Motor neuron (in vitro differentiated cells): ENCODE measurements at regions of chr7 and their contacts with region 1.

Region 1: DNA sequence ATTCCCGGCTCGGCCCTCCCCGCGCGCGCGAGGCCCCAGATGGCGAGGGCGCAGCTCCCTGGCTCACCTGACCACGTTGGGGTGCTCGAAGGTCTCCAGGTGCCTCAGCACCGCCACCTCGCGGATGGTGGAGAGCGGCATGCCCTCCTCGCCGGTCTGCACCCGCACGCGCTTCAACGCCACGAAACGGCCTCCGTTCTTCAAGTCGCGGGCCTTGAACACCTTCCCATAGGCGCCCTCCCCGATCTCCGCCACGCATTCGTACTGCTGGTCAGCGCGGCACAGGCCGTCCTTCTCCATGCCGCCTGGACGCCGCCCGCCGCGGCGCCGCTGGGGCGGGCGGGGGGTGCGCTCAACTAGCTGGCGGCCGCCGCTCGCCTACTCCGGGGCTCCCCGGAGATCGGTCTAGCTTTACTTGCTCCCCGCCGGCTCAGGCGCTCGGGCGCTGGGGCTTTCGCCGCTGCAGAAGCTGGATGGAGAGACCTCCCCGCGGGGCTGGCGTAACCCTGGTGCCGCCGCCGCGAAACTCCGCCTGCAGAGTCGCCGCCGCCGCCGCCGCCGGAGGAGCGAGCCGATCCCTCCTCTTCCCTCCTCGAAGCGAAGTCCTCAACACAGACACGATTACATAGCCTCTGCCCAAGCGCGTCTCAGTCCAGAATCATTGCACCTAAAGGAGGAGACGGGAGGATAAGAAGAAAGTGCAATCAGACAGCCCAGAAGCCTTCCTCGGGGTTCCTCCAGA is 3.2 kb downstream of the CDK6 start:
- ATAC-seq: peak; percentile 30 to 73 (median 64)
- H3K4me3 ChIP-seq: peak overlapping the region; percentile 61 to 84 (median 79)
- H3K27ac ChIP-seq: peak overlapping the region; percentile 42 to 79
- H3K4me1 ChIP-seq: peaks cover 25 to 29% of the 10 kb centered on the region in 2 donors

Region 2: DNA sequence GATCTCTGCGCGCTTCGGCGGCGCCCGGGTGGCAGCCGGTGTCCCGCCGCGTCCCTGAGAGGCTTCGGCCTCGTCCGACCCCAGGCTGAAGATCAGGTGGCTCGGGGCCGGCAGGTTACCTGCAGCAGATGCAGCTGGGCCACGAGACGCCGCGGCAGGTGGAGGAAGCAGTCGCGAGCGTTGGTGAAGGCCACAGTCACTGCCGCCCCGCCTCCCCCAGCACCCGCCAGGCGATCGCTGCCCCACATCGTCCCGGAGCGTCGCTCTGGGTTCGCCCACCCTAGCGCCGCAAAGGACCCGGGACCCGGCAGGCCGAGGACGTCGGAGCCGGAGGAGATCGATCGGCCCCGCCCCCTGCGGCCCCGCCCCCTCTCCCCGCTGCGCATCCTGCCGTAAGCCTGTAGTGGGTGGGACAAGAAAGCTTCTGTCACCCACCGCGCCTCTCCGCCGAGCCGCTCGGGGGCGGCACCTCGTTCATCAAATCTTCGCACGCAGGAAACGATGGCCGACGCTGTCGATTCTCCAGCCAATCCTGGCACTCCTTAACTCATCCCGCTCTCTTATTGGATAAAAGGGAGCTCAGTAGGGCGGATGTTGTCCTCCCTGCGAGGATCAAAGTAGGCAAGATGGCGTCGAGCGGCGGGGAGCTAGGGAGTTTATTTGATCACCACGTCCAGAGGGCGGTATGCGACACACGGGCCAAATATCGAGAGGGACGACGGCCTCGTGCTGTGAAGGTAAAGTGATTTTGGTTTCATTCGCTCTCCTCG is 304.8 kb before region 1 on chr7 and contains the starts of genes PEX1 and RBM48:
- in situ Hi-C with region 1: no loop called
- ATAC-seq: peak; percentile 90 to 96 (median 94)
- H3K4me3 ChIP-seq: peak within 1 kb of the TSS; percentile 59 to 87 (median 70)
- H3K27ac ChIP-seq: peak within 1 kb of the TSS; percentile 78 to 82
- H3K4me1 ChIP-seq: peaks cover 7 to 12% of the 10 kb centered on the region in 2 donors
- total RNA-seq, gene PEX1: 19.2 to 51.9 (median 25.9) TPM
- total RNA-seq, gene RBM48: 11.4 to 18.3 (median 15.2) TPM

Region 3: GRCh38 chr7:92621026-92621540 is 212.1 kb before region 1 on chr7:
- in situ Hi-C with region 1: loop called in 2 of 9 experiments (anchors 25 kb)
- ATAC-seq: peak; percentile 44 to 92 (median 75)
- H3K4me3 ChIP-seq: no peak overlapping the region
- H3K27ac ChIP-seq: no peak overlapping the region
- H3K4me1 ChIP-seq: peaks cover 2 to 3% of the 10 kb centered on the region in 2 donors

Region 4: GRCh38 chr7:92691578-92691977 is 141.6 kb before region 1 on chr7:
- in situ Hi-C with region 1: loop called in 3 of 9 experiments (anchors 25 kb)
- ATAC-seq: peak in 5 of 8 experiments; percentile 23 to 44 (median 32)
- H3K4me3 ChIP-seq: no peak overlapping the region
- H3K27ac ChIP-seq: no peak overlapping the region
- H3K4me1 ChIP-seq: peaks cover under 1 to 9% of the 10 kb centered on the region in 2 donors

Region 5: GRCh38 chr7:92933810-92934449 is 100.7 kb after region 1 on chr7:
- in situ Hi-C with region 1: no loop called
- ATAC-seq: no peak
- H3K4me3 ChIP-seq: no peak overlapping the region
- H3K27ac ChIP-seq: no peak overlapping the region
- H3K4me1 ChIP-seq: no peaks in the 10 kb centered on the region

Region 6: DNA sequence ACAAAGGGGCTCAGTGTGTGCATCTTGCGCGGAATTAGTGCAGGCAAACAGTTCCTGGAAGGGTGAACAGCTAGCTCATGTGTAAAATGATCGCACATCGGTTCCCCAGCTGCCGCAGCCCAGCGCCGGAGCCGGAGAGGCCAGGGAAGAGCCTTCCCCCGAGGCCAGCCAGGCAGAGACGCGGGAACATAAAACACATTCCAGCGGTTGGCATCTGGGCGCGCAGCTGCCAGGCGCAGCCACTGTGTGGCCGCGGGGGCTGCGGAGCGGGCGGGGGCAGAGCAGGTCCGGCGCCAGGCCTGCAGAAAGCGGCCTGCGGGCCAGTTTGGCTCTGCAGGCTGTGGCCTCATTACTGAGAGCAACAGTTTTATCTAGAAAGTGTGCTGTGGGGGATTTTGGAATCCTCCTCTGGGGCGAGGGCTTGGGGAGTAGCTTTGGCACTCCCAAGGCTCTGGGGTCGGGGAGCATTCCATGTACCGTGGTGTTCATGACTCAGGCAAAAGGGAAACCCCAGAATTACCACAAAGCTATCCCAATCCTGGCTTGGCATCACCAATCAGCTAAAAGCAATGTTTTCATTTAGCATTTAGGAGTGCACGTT is 210.3 kb after region 1 on chr7:
- in situ Hi-C with region 1: loop called in 1 of 9 experiments (anchors 25 kb)
- ATAC-seq: peak; percentile 63 to 90 (median 74)
- H3K4me3 ChIP-seq: peak overlapping the region in 2 of 5 donors; percentile 9 to 13
- H3K27ac ChIP-seq: no peak overlapping the region
- H3K4me1 ChIP-seq: peaks cover 7 to 12% of the 10 kb centered on the region in 2 donors